ENCODE measurements at regions of chr1 and their contacts with region 1.

Region 1: DNA sequence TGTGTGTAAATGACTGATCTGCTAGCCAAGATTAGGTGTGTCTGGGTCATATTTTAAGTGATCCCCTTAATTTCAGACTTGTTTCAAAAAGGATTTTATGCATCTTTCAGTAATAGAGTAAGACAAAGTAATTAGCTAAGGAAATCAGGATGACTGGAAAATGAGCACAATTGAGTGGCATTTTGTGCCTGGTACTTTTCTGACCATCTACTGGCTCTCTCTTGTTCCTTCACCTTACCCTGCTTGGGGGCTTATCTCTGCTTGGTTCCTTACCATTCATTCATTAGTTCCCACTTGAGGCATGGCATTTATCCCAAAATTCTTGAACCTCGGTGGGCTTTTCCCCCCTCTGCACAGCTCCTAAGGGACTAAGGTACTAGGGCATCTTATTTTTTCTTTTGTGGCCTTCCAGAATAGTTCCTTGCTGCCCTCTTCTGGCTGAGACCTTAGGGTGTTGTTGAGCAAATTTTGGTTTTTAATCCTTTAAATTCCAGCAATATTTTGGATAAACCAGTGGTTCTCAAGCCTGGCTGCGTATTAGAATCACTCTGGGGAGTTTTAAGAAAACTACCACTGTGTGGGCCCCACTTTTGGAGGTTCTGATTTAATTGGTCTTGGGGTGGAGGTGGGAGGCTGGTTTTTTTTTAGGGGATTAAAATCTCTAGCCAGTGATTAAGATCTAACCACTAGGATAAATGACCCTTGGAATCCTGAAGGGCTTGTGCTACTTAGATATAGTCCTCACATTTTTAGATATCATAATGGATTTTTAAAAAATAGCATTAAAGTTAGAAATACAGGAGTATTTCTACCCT is 50.8 kb downstream of the HS2ST1 start:
- DNase-seq: no peak
- ATAC-seq: no peak
- H3K4me3 ChIP-seq: no peak overlapping the region
- H3K27ac ChIP-seq: no peak overlapping the region
- H3K4me1 ChIP-seq: no peaks in the 10 kb centered on the region
- H3K27me3 ChIP-seq: no peaks in the 10 kb centered on the region

Region 2: DNA sequence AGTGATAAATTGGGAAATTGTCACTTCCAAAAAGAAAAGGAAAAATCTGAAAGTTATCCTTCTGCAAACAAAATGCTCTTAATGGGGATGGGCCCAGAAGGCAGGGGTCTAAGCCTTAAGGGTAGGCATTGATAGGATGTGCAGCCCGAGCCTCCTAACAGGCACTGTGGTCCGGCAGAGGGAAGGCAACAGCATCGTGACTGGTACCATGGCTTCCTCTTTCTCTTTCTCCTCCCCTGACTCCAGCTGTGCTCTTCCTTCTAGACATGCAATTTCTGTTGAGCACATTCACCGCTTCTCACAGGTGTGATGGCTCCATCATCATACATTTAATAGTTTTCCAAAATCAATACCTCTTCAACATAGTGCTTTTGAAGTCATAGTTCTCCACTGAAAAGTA is 142.8 kb before region 1 on chr1:
- intact Hi-C with region 1: no loop called
- DNase-seq: no peak
- ATAC-seq: no peak
- H3K4me3 ChIP-seq: no peak overlapping the region
- H3K27ac ChIP-seq: no peak overlapping the region
- H3K4me1 ChIP-seq: no peaks in the 10 kb centered on the region
- H3K27me3 ChIP-seq: no peaks in the 10 kb centered on the region

Region 3: DNA sequence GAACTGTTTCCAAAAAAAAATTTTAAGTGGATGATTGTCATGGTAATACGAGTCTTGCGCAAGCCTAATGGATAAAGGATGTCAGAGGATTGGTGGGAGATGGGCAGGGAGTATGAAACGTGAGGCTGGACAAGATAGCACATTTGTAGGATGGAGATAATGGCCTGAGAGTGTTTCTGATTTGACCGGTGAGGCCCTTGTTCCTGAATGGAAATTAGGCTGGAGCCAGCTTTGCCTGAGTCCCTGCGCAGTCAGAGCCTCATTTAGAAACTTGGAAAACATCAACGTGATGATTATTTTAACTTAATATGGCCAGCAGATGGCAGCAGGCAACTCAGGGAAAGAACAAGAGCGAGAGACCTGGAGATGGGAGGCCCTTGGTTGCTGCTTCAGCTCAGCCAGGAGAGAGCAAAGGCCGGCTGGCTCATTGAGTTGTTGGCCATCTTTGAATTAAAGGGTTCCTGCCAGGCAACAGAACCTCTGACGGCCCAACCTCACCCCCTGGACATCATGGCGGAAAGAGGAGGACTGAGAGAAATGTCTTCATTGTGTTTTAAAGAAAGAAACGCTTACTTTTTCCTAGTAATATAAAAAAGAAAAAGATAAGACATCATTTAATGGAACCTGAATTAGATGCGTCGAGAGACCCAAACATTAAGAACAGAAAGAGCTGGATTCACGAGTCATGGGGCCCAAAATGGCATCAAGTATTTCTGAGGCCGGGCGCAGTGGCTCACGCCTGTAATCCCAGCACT is 131.6 kb before region 1 on chr1:
- intact Hi-C with region 1: loop called in 2 of 4 experiments (anchors 5 kb)
- DNase-seq: peak; percentile 73 to 81 (median 73)
- ATAC-seq: peak; percentile 88 to 91
- H3K4me3 ChIP-seq: no peak overlapping the region
- H3K27ac ChIP-seq: no peak overlapping the region
- H3K4me1 ChIP-seq: no peaks in the 10 kb centered on the region
- H3K27me3 ChIP-seq: no peaks in the 10 kb centered on the region